ENCODE measurements at regions of chr4 and their contacts with region 1.

Region 1: DNA sequence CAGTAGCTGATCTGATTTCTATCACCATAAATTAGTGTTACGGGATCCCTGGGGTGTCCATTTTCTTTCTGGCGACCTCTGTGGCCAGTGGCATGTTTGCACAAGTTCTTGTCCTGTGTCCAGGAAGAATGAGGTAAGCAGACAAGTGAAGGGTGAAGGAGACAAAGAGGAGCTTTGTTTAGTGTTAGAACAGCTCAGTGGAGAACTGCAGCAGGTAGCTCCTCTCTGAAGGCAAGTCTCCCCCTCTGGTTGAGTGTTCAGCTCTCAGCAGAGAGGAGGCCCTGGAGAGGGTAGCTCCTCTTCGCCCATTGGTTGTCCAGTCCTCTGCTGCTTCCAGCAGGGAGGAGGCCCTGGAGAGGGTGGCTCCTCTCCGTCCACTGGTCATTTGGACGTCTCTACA is 47.2 kb downstream of the DMP1 start:
- DNase-seq: no peak
- H3K4me3 ChIP-seq: no peak overlapping the region
- H3K27ac ChIP-seq: no peak overlapping the region
- H3K4me1 ChIP-seq: no peaks in the 10 kb centered on the region
- H3K27me3 ChIP-seq: no peaks in the 10 kb centered on the region
- CTCF ChIP-seq: no peak
- EP300 ChIP-seq: no peak
- POLR2A ChIP-seq: no peak

Region 2: DNA sequence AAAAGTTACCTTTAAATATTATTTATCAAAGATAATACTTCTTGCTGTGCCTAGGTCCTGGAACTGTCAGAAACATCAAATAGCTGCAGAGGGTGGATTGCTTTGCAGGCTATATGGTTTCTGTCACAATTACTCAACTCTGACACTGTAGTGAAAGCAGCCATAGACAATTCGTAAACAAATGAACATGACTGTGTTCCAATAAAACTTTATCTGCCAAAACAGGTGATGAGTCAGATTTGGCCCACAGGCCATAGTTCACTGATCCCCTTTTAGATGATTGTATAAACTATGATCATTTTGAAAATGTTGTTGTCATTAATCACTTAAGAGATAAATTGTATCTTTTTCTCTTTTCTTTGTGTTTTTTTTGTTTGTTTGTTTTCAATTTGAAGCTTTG is 127.1 kb after region 1 on chr4:
- intact Hi-C with region 1: loop called in 1 of 4 experiments (anchors 10 kb)
- DNase-seq: no peak
- H3K4me3 ChIP-seq: no peak overlapping the region
- H3K27ac ChIP-seq: no peak overlapping the region
- H3K4me1 ChIP-seq: no peaks in the 10 kb centered on the region
- H3K27me3 ChIP-seq: no peaks in the 10 kb centered on the region
- CTCF ChIP-seq: no peak
- EP300 ChIP-seq: no peak
- POLR2A ChIP-seq: no peak